Head of caudate nucleus (tissue), 42 donors: ENCODE measurements at regions of chr14 and their contacts with region 1.

Region 1: GRCh38 chr14:60628892-60629291 is 20.4 kb downstream of the SIX1 start:
- DNase-seq: no peak

Region 2: DNA sequence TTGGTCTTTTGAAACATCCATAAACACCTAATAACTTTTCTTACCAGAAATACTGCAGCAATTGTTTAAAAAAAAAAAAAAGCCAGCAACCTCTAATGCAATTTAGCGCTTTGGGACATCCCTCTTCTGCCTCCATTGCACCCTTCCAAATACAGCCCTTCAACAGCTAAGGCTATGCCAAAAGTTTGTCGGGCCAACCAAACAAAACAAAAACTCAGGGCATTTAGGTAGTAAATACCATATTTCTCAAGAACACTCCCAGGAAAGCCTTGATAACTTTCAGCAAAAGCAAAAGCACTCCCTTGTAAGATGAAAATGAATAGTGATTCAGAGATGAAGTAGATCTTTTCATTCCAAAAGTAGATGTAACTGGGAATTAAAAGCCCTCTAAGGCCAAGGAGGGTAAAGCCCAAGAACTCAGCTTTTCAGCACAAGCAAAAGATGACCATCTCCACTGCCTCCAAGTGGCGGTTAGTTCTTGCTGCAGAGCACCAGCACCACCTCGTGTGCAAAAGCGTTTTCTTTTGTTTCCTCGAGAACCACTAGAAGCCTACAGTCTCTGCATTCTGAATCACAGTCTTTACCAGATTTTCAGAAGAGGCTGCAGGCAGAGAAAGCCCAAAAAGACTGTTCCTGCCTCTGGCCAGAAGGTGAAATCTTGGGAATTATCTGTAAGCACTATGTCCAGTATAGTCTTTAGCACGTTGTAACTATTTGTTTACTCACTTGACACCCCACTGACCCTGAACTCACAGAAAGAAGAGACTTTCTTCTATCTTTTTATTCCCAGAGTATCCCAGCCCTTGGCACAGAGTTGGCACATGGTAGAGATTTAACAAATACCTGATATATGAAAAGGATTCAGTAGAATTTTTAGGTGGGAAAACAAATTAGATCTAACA is 66.8 kb before region 1 on chr14:
- intact Hi-C with region 1: no loop called
- DNase-seq: peak in 34 of 42 donors; percentile 7 to 73 (median 40)

Region 3: DNA sequence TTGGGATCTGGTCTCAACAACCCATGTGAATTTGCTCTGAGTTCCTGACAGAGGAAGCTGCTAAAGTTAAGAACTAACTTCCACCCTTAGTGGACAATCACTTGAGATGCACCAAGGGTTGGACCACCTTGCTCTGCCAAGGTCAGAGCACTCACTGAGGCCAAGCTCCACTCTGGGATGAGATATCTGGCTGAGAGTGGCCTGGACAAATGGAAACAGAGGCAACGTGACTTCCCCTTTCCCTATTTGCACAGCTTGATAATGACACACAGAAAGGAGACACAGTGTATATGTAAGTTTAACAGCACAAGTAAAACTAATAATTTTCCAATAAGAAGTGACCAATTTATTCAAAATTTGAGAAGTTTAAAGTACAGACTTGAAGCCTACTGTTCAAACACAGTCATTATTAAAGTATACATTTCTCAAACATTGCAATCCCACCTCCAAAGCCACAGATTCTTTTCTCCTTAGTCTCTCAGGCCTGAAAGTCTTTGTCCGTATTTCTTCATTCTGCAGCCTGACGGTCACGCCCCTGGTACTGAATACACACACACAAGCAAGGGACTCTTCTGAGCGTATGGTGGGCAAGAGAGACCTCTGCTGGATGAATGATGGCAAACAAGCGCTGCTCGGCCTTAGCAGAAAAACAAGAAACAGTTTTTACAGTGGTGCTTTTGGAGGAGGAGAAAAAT is 623.6 kb after region 1 on chr14:
- intact Hi-C with region 1: loop called (anchors 2 kb)
- DNase-seq: peak; percentile 20 to 87 (median 74)